ENCODE measurements at regions of chr7 and their contacts with region 1.

Region 1: DNA sequence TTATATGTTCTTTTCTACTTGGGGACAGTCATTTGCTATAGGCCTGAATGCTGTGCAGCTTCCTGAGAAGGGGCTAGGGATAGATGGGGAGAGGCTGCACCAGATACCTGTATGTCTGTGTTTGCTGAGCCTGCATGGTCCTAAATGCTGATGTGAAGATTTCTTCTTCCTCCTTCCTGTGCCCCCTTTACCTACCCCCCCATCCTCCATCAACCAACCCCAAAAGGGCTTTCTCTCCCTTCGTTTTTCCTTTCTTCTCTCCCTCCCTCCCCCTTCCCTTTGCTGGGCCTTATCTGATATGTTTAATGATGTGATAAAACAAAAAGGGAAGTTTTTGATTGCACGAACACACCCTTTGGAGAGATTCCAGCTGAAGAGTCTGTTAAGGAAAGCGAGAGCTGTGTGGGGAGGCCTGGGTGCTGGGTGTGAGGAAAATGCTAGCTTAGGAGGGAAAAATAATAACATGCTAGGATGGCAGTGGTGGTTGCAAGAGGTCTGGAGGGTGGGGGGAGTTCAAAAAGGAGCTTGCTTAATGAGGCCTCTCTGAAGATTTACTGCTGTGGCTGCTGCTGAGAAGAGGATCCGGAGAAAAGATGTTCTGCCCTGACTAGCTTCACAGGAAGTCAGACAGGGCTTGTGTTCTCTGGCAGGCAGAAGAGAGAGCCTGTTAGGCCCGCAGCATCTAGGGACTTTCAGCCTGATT is 101.8 kb downstream of the SAMD9 start:
- DNase-seq: no peak
- H3K4me3 ChIP-seq: no peak overlapping the region
- H3K27ac ChIP-seq: peak overlapping the region; percentile 94
- H3K27me3 ChIP-seq: no peaks in the 10 kb centered on the region
- CTCF ChIP-seq: no peak

Region 2: GRCh38 chr7:92898798-92899197 is 117.1 kb before region 1 on chr7:
- CTCF ChIA-PET with region 1: no interaction called
- POLR2A ChIA-PET with region 1: no interaction called
- DNase-seq: no peak
- H3K4me3 ChIP-seq: no peak overlapping the region
- H3K27ac ChIP-seq: no peak overlapping the region
- H3K27me3 ChIP-seq: no peaks in the 10 kb centered on the region
- CTCF ChIP-seq: no peak

Region 3: DNA sequence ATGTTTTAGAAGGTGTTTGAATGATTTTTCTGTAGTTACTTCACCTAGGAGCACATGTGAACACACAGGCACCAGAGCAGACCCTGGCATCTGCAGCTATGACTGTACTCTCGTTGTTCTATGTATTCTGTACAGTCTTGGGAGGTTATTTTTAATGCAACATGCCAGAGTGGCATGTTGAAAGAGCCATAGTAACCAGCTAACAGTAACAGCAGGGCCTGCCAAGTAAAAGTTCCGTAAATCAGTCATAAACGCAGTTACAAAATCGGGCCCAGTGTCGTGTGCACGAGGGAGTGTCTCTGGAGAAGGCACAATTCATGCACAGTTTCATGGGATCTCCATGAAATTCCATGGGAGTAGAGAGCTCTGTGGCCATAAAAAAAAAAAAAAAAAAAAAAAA is 71.3 kb before region 1 on chr7:
- CTCF ChIA-PET with region 1: no interaction called
- POLR2A ChIA-PET with region 1: no interaction called
- DNase-seq: no peak
- H3K4me3 ChIP-seq: no peak overlapping the region
- H3K27ac ChIP-seq: no peak overlapping the region
- H3K27me3 ChIP-seq: no peaks in the 10 kb centered on the region
- CTCF ChIP-seq: no peak

Region 4: GRCh38 chr7:93039786-93040185 is 23.9 kb after region 1 on chr7:
- CTCF ChIA-PET with region 1: no interaction called
- POLR2A ChIA-PET with region 1: interaction called, 12 read pairs
- DNase-seq: no peak
- H3K4me3 ChIP-seq: no peak overlapping the region
- H3K27ac ChIP-seq: no peak overlapping the region
- H3K27me3 ChIP-seq: no peaks in the 10 kb centered on the region
- CTCF ChIP-seq: no peak

Measured in AG04450 (cell line).